Common myeloid progenitor, CD34-positive (primary cell): ENCODE measurements at regions of chr11 and their contacts with region 1.

Region 1: GRCh38 chr11:1882519-1883238 is 9.0 kb downstream of the PRR33 start:
- DNase-seq: peak; percentile 67 to 83 (median 81)
- H3K4me3 ChIP-seq: no peak overlapping the region
- H3K27ac ChIP-seq: no peak overlapping the region
- H3K4me1 ChIP-seq: peaks cover 0 to 55% (median 49%) of the 10 kb centered on the region in 4 experiments
- H3K27me3 ChIP-seq: no peaks in the 10 kb centered on the region

Region 2: DNA sequence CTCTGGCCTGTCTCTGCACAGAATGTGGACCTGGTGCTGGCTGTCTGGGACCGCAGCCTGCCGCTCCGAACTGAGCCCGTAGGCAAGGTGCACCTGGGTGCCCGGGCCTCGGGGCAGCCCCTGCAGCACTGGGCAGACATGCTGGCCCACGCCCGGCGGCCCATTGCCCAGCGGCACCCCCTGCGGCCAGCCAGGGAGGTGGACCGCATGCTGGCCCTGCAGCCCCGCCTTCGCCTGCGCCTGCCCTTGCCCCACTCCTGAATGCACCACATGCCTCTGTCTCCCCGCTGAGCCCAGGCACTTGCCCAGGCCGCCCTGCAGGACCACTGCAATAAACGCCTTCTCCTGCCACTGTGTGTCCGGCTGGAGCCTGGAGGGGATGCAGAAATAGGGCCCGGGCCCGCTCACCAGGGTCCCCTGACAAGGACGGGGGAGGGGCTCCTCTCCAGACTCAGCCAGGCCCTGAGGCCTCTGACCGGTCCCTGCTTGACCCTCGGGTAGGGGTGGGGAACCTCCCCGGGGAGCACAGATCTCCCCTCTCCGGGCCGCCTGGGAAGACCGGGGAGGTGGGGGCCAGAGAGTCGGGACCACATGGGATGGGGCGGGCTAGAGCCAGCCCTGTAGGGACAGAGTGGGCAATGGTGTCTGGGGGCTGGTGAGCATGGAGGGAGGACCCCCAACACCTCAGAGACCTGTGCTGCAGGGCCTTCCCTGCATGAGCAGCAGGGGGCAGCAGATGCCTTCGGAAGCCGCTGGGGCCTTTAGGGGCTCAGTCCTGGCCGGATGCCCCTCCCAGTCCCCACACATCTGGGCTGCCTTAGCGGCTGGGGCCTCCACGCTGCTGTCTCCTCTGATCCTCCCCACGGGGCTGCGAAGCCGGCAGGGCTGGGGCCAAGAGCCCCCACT is 45.3 kb before region 1 on chr11:
- CTCF ChIA-PET with region 1: interaction called, 13 read pairs
- POLR2A ChIA-PET with region 1: no interaction called
- DNase-seq: peak; percentile 79 to 90 (median 88)
- H3K4me3 ChIP-seq: no peak overlapping the region
- H3K27ac ChIP-seq: no peak overlapping the region
- H3K4me1 ChIP-seq: peaks cover 0 to 54% (median 38%) of the 10 kb centered on the region in 4 experiments
- H3K27me3 ChIP-seq: peaks cover 0 to 2% (median 0%) of the 10 kb centered on the region in 5 experiments

Region 3: GRCh38 chr11:1866776-1867175 is 15.9 kb before region 1 on chr11:
- CTCF ChIA-PET with region 1: interaction called, 10 read pairs
- POLR2A ChIA-PET with region 1: no interaction called
- DNase-seq: no peak
- H3K4me3 ChIP-seq: no peak overlapping the region
- H3K27ac ChIP-seq: no peak overlapping the region
- H3K4me1 ChIP-seq: peaks cover 0 to 21% (median 14%) of the 10 kb centered on the region in 4 experiments
- H3K27me3 ChIP-seq: no peaks in the 10 kb centered on the region

Region 4: GRCh38 chr11:1896923-1897322 is 14.2 kb after region 1 on chr11:
- CTCF ChIA-PET with region 1: interaction called, 18 read pairs
- POLR2A ChIA-PET with region 1: interaction called, 4 read pairs
- DNase-seq: peak; percentile 76 to 92 (median 88)
- H3K4me3 ChIP-seq: peak overlapping the region in 5 of 7 experiments; percentile 30 to 71 (median 56)
- H3K27ac ChIP-seq: peak overlapping the region; percentile 73 to 77
- H3K4me1 ChIP-seq: peaks cover 10 to 59% (median 33%) of the 10 kb centered on the region in 4 experiments
- H3K27me3 ChIP-seq: no peaks in the 10 kb centered on the region

Region 5: GRCh38 chr11:1917671-1918516 is 35.2 kb after region 1 on chr11:
- CTCF ChIA-PET with region 1: interaction called, 53 read pairs
- POLR2A ChIA-PET with region 1: no interaction called
- DNase-seq: no peak
- H3K4me3 ChIP-seq: no peak overlapping the region
- H3K27ac ChIP-seq: no peak overlapping the region
- H3K4me1 ChIP-seq: peaks cover 0 to 33% (median 22%) of the 10 kb centered on the region in 4 experiments
- H3K27me3 ChIP-seq: no peaks in the 10 kb centered on the region

Region 6: GRCh38 chr11:1946812-1947484 is 64.3 kb after region 1 on chr11 and contains the start of gene MRPL23:
- CTCF ChIA-PET with region 1: interaction called, 36 read pairs
- POLR2A ChIA-PET with region 1: interaction called, 11 read pairs
- DNase-seq: no peak
- H3K4me3 ChIP-seq: no peak within 1 kb of the TSS
- H3K27ac ChIP-seq: no peak within 1 kb of the TSS
- H3K4me1 ChIP-seq: peaks cover 0 to 13% (median 9%) of the 10 kb centered on the region in 4 experiments
- H3K27me3 ChIP-seq: no peaks in the 10 kb centered on the region

Region 7: DNA sequence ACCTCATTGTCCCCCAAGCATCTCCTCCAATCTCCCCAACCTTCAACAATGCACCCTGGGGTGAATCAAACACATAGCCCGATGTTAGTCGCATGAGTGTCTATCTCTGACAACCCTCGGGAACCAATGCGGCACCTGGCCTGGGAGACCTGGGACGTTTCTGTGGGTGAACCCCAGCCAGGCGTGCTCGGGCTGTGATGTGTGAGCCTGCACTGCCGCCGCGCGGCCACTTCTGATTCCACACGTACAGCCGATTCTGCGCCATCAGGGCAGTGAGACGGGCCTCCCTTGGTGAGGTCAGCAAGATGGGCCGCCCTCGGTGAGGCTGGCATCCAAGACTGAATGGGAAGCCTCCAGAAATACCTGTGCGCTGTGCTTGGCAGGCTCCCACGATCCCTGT is 120.1 kb after region 1 on chr11:
- CTCF ChIA-PET with region 1: interaction called, 20 read pairs
- POLR2A ChIA-PET with region 1: no interaction called
- DNase-seq: no peak
- H3K4me3 ChIP-seq: no peak overlapping the region
- H3K27ac ChIP-seq: no peak overlapping the region
- H3K4me1 ChIP-seq: no peaks in the 10 kb centered on the region
- H3K27me3 ChIP-seq: no peaks in the 10 kb centered on the region